CD8-positive, alpha-beta memory T cell (primary cell): ENCODE measurements at regions of chr16 and their contacts with region 1.

Region 1: DNA sequence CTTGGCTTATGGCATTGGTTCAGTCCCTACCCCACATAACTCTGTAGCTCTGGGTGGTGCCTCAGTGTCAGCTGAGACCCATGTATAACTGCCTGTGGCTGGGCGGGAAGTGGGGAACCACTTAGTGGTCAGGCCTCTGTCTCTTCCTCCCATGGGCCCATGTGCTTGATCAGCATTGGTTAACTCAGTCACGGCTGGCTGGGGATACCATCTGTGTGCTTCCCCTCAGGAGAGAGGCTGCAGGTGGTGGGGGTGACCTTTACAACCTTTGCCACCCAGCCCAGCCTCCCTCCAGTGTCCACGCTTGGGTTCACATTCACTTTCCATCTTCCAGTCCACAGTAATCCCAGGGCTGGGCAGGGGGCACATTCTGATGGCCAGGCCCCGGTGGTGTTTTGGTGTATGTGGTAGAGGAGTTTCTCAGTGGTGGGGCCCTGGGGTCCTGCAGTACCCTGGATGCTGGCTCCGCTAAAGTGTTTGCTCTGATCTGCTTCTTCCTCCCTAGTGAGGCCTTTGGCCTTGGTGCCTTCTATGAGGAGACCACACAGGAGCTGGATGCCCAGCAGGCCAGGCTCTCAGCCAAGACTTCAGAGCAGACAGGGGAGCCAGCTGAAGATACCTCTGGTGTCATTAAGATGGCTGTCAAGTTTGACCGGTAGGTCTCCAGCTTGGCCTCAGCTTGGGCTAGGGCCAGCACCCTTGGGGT is 10.2 kb upstream of the NFATC3 start:
- DNase-seq: peak; percentile 53 to 87 (median 69)
- H3K4me3 ChIP-seq: peak overlapping the region; percentile 40
- H3K4me3 Mint-ChIP-seq: peak overlapping the region; percentile 51 to 91 (median 82)
- H3K27ac ChIP-seq: no peak overlapping the region
- H3K27ac Mint-ChIP-seq: peak overlapping the region; percentile 81 to 99 (median 94)
- H3K4me1 ChIP-seq: peaks cover 85% of the 10 kb centered on the region
- H3K4me1 Mint-ChIP-seq: peaks cover 88 to 90% (median 90%) of the 10 kb centered on the region in 3 donors
- H3K27me3 ChIP-seq: no peaks in the 10 kb centered on the region
- H3K27me3 Mint-ChIP-seq: no peaks in the 10 kb centered on the region

Region 2: GRCh38 chr16:68064791-68065365 is 10.1 kb before region 1 on chr16:
- CTCF ChIA-PET with region 1: interaction called, 91 read pairs
- POLR2A ChIA-PET with region 1: interaction called, 18 read pairs
- DNase-seq: peak; percentile 56 to 78 (median 62)
- H3K4me3 ChIP-seq: no peak overlapping the region
- H3K4me3 Mint-ChIP-seq: peak overlapping the region; percentile 1 to 88 (median 63)
- H3K27ac ChIP-seq: peak overlapping the region; percentile 12
- H3K27ac Mint-ChIP-seq: peak overlapping the region; percentile 70 to 93 (median 88)
- H3K4me1 ChIP-seq: peaks cover 82% of the 10 kb centered on the region
- H3K4me1 Mint-ChIP-seq: peaks cover 74 to 89% (median 87%) of the 10 kb centered on the region in 3 donors
- H3K27me3 ChIP-seq: no peaks in the 10 kb centered on the region
- H3K27me3 Mint-ChIP-seq: no peaks in the 10 kb centered on the region